ENCODE measurements at regions of chr5 and their contacts with region 1.

Region 1: DNA sequence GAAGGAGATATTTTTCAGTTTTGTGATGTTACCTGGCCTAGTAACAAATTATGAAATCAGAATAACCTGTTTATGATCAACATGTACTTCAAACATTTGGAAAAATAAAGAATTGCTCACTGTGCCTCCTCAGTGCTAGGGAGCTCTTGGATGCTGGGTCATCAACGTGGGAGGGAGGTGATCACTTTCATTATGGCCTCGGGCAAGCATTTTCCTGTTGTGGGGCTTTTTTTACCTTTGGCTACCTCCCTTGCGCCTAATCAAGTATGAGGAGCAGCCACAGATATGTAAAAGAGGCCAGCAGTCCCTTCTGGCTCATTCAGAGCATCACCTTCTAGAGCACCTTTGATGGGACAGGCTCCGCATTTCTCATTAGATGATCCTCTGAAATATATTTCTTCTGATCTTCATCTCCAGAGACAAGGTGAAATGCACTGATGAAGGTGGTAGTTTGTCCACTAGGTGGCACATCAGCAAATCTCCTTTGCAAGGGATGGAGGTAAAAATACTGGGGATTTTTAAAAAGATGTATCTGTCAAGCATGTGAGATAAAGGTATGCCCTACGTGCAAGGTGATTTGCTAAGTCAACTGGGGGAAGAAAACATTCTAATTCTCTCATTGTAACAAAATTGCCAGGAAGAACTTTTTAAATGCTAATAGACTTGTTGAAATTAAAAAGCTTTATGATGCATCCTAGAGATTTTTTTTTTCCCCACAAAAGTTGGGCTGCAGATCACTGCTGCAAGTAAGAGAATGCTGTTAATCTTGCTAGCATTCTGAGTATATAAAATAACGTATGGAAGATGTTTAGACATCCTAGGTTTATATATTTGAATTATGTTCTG is 218.2 kb downstream of the MAST4 start:
- ATAC-seq: peak; percentile 38 to 70 (median 56)
- H3K4me3 ChIP-seq: no peak overlapping the region
- H3K27ac ChIP-seq: no peak overlapping the region
- H3K4me1 ChIP-seq: no peaks in the 10 kb centered on the region

Region 2: DNA sequence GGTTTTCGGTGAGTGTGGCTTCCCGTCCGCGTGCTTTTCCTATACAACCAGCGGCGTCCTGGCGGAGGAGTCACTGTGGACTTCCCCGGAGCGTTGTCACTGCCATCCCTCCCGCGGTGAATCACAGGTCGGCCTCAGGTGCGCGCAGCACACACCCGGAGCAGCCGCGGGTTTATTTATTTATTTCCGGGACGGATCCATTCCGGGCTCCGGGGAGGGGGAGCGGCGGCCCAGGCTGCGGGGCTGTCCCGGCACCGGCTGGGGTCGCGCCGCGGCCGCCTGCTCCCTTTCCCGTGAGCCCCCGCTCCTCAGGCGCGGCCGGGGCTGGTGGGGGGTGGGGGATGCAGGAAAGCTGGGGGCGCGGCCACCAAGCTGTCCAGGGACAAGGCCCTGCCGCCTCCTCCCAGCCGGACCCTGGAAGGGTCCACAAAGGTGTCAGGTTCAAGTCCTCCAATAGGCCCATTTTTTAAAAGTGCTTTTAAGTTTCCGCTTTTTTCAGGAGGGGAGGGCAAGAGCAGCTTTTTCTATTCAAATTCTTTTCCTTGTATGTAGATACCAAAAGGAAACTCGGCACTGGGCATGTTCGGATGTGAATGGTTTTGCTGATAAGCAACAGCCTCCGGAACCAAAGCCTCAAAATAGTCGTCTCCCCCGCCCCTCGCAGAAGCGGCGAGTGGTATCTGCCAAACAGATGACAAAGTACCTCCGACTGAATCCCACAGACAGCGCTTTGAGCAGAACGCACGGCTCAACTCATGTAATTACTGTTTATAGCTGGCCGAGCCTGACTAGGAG is 189.8 kb after region 1 on chr5:
- in situ Hi-C with region 1: loop called in 1 of 9 experiments (anchors 25 kb)
- ATAC-seq: peak; percentile 81 to 97 (median 92)
- H3K4me3 ChIP-seq: peak overlapping the region; percentile 33 to 49 (median 38)
- H3K27ac ChIP-seq: peak overlapping the region in 1 of 2 donors; percentile 5
- H3K4me1 ChIP-seq: peaks cover 3 to 10% of the 10 kb centered on the region in 2 donors

Region 3: GRCh38 chr5:67149951-67150523 is 335.7 kb after region 1 on chr5:
- in situ Hi-C with region 1: loop called in 3 of 9 experiments (anchors 25 kb)
- ATAC-seq: peak in 2 of 8 experiments; percentile 28 to 55
- H3K4me3 ChIP-seq: no peak overlapping the region
- H3K27ac ChIP-seq: no peak overlapping the region
- H3K4me1 ChIP-seq: peaks cover 0 to 10% of the 10 kb centered on the region in 2 donors

Region 4: DNA sequence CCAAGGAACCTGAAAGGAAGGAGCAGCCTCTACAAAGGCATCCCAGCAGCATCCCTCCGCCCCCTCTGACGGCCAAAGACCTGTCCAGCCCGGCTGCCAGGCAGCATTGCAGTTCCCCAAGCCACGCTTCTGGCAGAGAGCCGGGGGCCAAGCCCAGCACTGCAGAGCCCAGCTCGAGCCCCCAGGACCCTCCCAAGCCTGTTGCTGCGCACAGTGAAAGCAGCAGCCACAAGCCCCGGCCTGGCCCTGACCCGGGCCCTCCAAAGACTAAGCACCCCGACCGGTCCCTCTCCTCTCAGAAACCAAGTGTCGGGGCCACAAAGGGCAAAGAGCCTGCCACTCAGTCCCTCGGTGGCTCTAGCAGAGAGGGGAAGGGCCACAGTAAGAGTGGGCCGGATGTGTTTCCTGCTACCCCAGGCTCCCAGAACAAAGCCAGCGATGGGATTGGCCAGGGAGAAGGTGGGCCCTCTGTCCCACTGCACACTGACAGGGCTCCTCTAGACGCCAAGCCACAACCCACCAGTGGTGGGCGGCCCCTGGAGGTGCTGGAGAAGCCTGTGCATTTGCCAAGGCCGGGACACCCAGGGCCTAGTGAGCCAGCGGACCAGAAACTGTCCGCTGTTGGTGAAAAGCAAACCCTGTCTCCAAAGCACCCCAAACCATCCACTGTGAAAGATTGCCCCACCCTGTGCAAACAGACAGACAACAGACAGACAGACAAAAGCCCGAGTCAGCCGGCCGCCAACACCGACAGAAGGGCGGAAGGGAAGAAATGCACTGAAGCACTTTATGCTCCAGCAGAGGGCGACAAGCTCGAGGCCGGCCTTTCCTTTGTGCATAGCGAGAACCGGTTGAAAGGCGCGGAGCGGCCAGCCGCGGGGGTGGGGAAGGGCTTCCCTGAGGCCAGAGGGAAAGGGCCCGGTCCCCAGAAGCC is 351.4 kb after region 1 on chr5:
- in situ Hi-C with region 1: loop called in 2 of 9 experiments (anchors 25 kb)
- ATAC-seq: peak in 4 of 8 experiments; percentile 73 to 93 (median 87)
- H3K4me3 ChIP-seq: no peak overlapping the region
- H3K27ac ChIP-seq: no peak overlapping the region
- H3K4me1 ChIP-seq: peaks cover 0 to 2% of the 10 kb centered on the region in 2 donors

Region 5: DNA sequence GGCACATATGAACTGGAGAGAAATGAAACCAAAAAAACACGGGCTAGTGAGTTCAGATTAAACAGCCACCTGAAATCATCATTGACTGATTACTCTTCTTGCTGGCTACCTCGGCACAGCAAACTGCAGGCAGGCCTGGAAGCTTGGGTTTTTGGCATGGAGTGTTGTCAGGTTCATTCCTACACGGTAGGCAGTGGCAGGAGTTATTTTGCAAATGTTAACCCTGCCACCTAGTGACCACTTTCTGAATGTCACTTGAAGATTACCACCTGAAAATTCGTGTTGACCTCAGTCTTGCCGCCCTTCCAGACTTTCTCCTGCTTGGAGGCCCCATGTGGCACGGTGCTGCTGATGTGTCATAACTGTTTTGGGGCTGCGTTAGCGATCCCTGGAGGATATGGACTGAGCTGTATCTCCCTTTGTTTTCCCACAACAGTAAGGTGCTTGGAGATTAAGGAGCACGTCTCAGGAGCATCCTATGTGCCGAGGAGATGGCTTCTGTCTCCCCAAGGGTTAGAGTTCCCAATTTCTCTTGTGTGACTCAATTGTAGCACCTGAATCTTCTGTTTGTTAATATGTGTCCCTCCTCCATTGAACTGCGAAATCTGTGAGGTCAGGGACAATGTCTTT is 394.9 kb after region 1 on chr5:
- in situ Hi-C with region 1: loop called in 5 of 9 experiments (anchors 10 to 25 kb)
- ATAC-seq: peak; percentile 61 to 96 (median 85)
- H3K4me3 ChIP-seq: no peak overlapping the region
- H3K27ac ChIP-seq: no peak overlapping the region
- H3K4me1 ChIP-seq: no peaks in the 10 kb centered on the region

Measured in motor neuron (in vitro differentiated cells).